Colonic mucosa (tissue), 4 donors: ENCODE measurements at regions of chr12 and their contacts with region 1.

Region 1: GRCh38 chr12:118376089-118377020 is at the start of gene SUDS3:
- DNase-seq: peak; percentile 97
- H3K4me3 ChIP-seq: peak within 1 kb of the TSS; percentile 98
- H3K27ac ChIP-seq: peak within 1 kb of the TSS; percentile 93
- H3K4me1 ChIP-seq: no peaks in the 10 kb centered on the region
- H3K27me3 ChIP-seq: no peaks in the 10 kb centered on the region
- CTCF ChIP-seq: peak; percentile 95
- total RNA-seq, gene SUDS3: 42.0 to 51.8 TPM

Region 2: GRCh38 chr12:118120579-118121363 is 255.6 kb before region 1 on chr12:
- intact Hi-C with region 1: loop called (anchors 5 kb)
- DNase-seq: peak; percentile 88
- H3K4me3 ChIP-seq: no peak overlapping the region
- H3K27ac ChIP-seq: no peak overlapping the region
- H3K4me1 ChIP-seq: no peaks in the 10 kb centered on the region
- H3K27me3 ChIP-seq: no peaks in the 10 kb centered on the region
- CTCF ChIP-seq: peak; percentile 74

Region 3: DNA sequence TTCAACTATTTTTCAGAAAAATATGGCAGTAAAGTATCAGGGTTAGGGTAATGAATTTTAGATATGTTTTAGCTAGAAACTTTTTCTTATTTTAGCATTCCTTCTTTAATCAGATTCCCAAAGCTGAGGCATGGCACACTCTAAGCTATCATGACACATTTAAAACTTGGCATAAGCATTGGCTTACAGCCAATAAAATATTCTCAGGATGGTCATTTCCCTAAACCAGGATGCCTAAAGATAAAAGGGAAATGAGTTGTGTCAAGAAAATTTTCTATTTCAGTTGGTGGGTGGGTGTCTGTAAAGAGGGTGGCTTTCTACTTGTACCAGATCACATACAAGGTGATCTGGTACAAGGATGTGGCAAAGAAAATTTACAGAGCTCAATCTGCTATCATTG is 192.7 kb before region 1 on chr12:
- intact Hi-C with region 1: loop called (anchors 2 kb)
- DNase-seq: no peak
- H3K4me3 ChIP-seq: no peak overlapping the region
- H3K27ac ChIP-seq: no peak overlapping the region
- H3K4me1 ChIP-seq: no peaks in the 10 kb centered on the region
- H3K27me3 ChIP-seq: no peaks in the 10 kb centered on the region
- CTCF ChIP-seq: no peak

Region 4: DNA sequence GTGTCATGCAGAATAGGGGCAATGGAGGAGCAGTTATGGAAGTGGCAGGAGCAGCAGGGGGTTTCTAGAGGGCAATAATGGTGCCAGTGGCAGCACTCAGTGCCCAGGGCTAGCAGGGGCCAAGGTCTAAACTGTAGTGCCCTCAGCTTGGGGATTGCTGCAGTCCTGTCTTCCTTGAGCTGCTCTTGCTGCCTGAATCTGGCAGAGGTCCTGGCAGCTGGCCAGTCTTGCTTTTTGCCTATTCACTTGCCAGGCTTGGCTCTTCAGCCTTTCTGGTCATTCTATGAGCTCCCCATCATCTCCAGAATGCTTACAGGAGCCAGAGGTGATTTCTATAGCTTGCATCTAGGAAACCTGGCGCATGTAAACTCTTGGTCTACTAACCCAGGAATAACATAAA is 72.0 kb after region 1 on chr12:
- intact Hi-C with region 1: no loop called
- DNase-seq: no peak
- H3K4me3 ChIP-seq: no peak overlapping the region
- H3K27ac ChIP-seq: no peak overlapping the region
- H3K4me1 ChIP-seq: no peaks in the 10 kb centered on the region
- H3K27me3 ChIP-seq: no peaks in the 10 kb centered on the region
- CTCF ChIP-seq: no peak

Region 5: GRCh38 chr12:118645219-118645618 is 268.9 kb after region 1 on chr12:
- intact Hi-C with region 1: no loop called
- DNase-seq: peak; percentile 18
- H3K4me3 ChIP-seq: no peak overlapping the region
- H3K27ac ChIP-seq: no peak overlapping the region
- H3K4me1 ChIP-seq: no peaks in the 10 kb centered on the region
- H3K27me3 ChIP-seq: no peaks in the 10 kb centered on the region
- CTCF ChIP-seq: no peak